Left cardiac atrium (tissue), 4 donors: ENCODE measurements at regions of chr4 and their contacts with region 1.

Region 1: GRCh38 chr4:100093091-100093866 is 97.0 kb downstream of the DDIT4L start:
- DNase-seq: peak; percentile 87
- ATAC-seq: peak; percentile 88 to 97

Region 2: GRCh38 chr4:99998062-99998867 is 95.0 kb before region 1 on chr4:
- intact Hi-C with region 1: loop called in 1 of 2 experiments (anchors 5 kb)
- DNase-seq: no peak
- ATAC-seq: peak in 1 of 2 donors; percentile 47

Region 3: GRCh38 chr4:100421361-100421978 is 328.2 kb after region 1 on chr4:
- intact Hi-C with region 1: loop called in 1 of 2 experiments (anchors 10 kb)
- DNase-seq: no peak
- ATAC-seq: peak; percentile 63

Region 4: GRCh38 chr4:101730291-101731117 is 1637.2 kb after region 1 on chr4:
- intact Hi-C with region 1: loop called in 1 of 2 experiments (anchors 10 kb)
- DNase-seq: peak; percentile 62
- ATAC-seq: peak; percentile 83 to 89